ENCODE measurements at regions of chr2 and their contacts with region 1.

Region 1: DNA sequence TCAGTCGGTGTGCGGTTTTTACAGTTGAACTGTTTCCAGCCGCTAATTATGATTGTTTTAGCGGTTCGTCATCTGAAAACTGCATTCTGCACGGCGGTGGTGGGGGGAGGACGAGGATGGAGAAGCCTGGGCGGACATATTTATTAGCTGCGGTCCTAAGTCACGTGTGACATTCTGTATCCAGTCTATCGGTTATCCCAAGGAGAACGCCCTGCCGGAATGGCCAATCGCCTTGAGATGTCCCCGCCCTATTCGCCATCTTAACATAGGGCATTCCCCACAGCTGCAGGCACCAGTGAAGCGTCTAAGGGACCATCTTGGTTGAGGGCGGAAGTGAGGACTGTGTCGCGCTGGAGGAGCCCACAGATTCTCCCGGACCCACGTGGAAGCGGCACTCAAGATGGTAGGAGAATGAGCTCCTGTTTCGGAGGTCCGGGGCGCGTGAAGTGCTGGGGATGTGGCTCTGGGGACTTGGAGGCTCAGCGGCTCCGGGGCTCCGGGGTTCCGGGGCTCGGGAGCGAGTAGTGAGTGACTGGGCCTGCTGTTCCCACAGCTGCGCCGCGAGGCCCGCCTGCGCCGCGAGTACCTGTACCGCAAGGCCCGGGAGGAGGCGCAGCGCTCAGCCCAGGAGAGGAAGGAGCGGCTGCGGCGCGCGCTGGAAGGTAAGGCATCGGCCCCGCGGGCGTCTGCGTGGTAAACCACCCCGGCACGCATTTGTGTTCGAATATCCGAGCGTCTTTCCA is at the start of gene IMP4:
- DNase-seq: peak; percentile 98 to 99
- H3K4me3 ChIP-seq: peak within 1 kb of the TSS; percentile 82 to 92
- H3K27ac ChIP-seq: peak within 1 kb of the TSS; percentile 90 to 97
- H3K4me1 ChIP-seq: peaks cover 3 to 16% of the 10 kb centered on the region in 2 donors
- H3K27me3 ChIP-seq: no peaks in the 10 kb centered on the region
- CTCF ChIP-seq: peak; percentile 9 to 36 (median 16)
- total RNA-seq, gene IMP4: 97.9 TPM

Region 2: DNA sequence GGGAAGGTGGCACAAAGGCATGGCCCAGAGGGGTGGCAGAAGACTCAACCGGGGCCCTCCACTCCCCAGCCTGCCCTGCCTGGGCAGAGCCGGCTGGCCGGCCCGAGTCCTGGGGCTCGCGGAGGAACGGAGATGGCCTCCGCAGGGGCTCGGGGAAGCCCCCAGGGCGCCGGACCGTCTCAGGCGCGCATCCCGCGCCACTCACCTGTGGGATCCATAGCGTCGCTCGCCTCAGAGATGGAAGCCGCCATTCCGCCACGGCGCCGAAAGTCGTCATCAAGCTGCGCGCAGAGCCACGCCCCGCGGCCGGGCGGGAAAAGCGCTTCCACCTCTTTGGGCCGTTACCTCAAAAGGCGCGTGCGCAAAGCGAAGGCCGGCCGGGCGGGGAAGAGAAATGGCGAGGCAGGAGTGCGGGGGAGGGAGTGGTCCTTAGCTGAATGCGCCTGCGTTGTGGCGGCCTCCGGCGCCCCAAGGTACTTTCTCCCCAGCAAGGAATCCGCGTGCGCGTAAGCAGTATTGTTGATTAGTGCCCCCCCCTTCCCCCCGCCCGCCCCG is 161.3 kb before region 1 on chr2 and contains the start of gene SMPD4:
- intact Hi-C with region 1: loop called (anchors 1 kb)
- DNase-seq: peak; percentile 86 to 98
- H3K4me3 ChIP-seq: peak within 1 kb of the TSS; percentile 92 to 99
- H3K27ac ChIP-seq: peak within 1 kb of the TSS; percentile 82 to 90
- H3K4me1 ChIP-seq: peaks cover 9 to 11% of the 10 kb centered on the region in 2 donors
- H3K27me3 ChIP-seq: no peaks in the 10 kb centered on the region
- CTCF ChIP-seq: no peak
- total RNA-seq, gene SMPD4: 185 TPM

Region 3: GRCh38 chr2:130288461-130289403 is 54.0 kb before region 1 on chr2:
- intact Hi-C with region 1: no loop called
- DNase-seq: no peak
- H3K4me3 ChIP-seq: no peak overlapping the region
- H3K27ac ChIP-seq: no peak overlapping the region
- H3K4me1 ChIP-seq: no peaks in the 10 kb centered on the region
- H3K27me3 ChIP-seq: no peaks in the 10 kb centered on the region
- CTCF ChIP-seq: no peak

Region 4: GRCh38 chr2:130372055-130372832 is 29.5 kb after region 1 on chr2:
- intact Hi-C with region 1: loop called (anchors 1 kb)
- DNase-seq: peak; percentile 38 to 94
- H3K4me3 ChIP-seq: peak overlapping the region; percentile 82 to 94
- H3K27ac ChIP-seq: peak overlapping the region; percentile 73 to 89
- H3K4me1 ChIP-seq: peaks cover 0 to 16% of the 10 kb centered on the region in 2 donors
- H3K27me3 ChIP-seq: no peaks in the 10 kb centered on the region
- CTCF ChIP-seq: peak; percentile 86 to 93 (median 87)

Region 5: GRCh38 chr2:131093006-131093695 is 750.4 kb after region 1 on chr2 and contains the start of gene FAM168B:
- intact Hi-C with region 1: loop called (anchors 5 kb)
- DNase-seq: peak; percentile 47 to 91
- H3K4me3 ChIP-seq: peak within 1 kb of the TSS; percentile 88 to 98
- H3K27ac ChIP-seq: peak within 1 kb of the TSS; percentile 88 to 98
- H3K4me1 ChIP-seq: peaks cover 0 to 15% of the 10 kb centered on the region in 2 donors
- H3K27me3 ChIP-seq: no peaks in the 10 kb centered on the region
- CTCF ChIP-seq: no peak
- total RNA-seq, gene FAM168B: 64.3 TPM